ENCODE measurements at regions of chr3 and their contacts with region 1.

Region 1: DNA sequence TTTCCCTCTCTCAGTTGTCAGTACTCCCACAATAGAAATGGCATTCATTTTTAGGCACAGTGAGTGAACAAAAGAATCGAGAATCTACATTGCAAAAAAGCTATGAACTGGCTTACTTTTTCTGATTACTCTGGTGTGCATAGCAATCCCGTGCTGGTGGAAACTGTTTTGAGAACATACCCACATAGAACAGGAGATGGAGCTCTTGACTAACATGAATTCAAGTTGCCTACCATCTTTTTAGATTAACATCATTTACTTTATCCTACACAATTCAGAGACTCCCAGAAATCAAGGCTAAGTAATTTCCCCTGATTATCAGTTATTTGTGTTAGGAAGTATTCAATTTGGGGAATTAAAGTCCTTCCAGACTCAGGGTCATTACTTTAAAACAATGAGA is 326.6 kb downstream of the ARPP21 start:
- DNase-seq: peak; percentile 62 to 77 (median 73)
- H3K4me3 ChIP-seq: no peak overlapping the region
- H3K27ac ChIP-seq: no peak overlapping the region
- H3K4me1 ChIP-seq: peaks cover 17 to 43% (median 23%) of the 10 kb centered on the region in 4 experiments
- H3K27me3 ChIP-seq: no peaks in the 10 kb centered on the region

Region 2: GRCh38 chr3:35817216-35817615 is 148.7 kb before region 1 on chr3:
- CTCF ChIA-PET with region 1: no interaction called
- POLR2A ChIA-PET with region 1: no interaction called
- DNase-seq: no peak
- H3K4me3 ChIP-seq: no peak overlapping the region
- H3K27ac ChIP-seq: no peak overlapping the region
- H3K4me1 ChIP-seq: no peaks in the 10 kb centered on the region
- H3K27me3 ChIP-seq: no peaks in the 10 kb centered on the region

Region 3: DNA sequence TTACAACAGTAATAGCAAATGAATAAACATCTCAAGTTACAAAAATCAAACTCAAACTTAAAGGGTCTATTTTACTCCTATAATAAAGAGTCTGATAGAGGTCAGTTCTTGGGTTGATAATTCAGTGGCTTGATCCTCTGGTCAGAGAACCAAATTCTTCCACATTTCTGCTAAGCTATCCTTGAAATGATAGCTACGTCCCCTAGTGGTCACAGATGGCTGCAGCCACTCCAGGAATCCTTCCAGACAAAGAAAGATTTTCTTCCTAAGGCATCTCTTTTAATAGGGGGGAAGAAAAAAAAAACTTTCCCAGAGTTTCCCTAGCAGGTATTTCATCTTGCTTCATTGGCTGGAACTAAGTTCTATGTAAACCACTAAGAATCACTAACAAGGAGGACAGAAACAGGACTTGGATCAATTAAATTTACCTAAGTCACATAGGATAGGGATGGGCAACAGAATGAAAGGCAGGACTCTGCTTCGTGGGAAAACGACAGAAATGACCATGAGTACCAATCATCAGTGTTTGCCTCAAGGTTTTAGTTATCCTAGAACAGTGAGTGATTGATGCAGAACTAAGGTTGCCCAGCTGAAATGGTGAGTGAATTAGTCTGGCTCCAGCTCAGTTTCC is 575.1 kb after region 1 on chr3:
- CTCF ChIA-PET with region 1: interaction called, 39 read pairs
- POLR2A ChIA-PET with region 1: no interaction called
- DNase-seq: peak; percentile 21 to 31 (median 31)
- H3K4me3 ChIP-seq: no peak overlapping the region
- H3K27ac ChIP-seq: no peak overlapping the region
- H3K4me1 ChIP-seq: no peaks in the 10 kb centered on the region
- H3K27me3 ChIP-seq: peaks cover 0 to 2% (median 0%) of the 10 kb centered on the region in 5 experiments

Region 4: GRCh38 chr3:36693670-36694069 is 727.8 kb after region 1 on chr3:
- CTCF ChIA-PET with region 1: interaction called, 49 read pairs
- POLR2A ChIA-PET with region 1: no interaction called
- DNase-seq: no peak
- H3K4me3 ChIP-seq: no peak overlapping the region
- H3K27ac ChIP-seq: no peak overlapping the region
- H3K4me1 ChIP-seq: no peaks in the 10 kb centered on the region
- H3K27me3 ChIP-seq: peaks cover 0 to 3% (median 0%) of the 10 kb centered on the region in 5 experiments

Region 5: DNA sequence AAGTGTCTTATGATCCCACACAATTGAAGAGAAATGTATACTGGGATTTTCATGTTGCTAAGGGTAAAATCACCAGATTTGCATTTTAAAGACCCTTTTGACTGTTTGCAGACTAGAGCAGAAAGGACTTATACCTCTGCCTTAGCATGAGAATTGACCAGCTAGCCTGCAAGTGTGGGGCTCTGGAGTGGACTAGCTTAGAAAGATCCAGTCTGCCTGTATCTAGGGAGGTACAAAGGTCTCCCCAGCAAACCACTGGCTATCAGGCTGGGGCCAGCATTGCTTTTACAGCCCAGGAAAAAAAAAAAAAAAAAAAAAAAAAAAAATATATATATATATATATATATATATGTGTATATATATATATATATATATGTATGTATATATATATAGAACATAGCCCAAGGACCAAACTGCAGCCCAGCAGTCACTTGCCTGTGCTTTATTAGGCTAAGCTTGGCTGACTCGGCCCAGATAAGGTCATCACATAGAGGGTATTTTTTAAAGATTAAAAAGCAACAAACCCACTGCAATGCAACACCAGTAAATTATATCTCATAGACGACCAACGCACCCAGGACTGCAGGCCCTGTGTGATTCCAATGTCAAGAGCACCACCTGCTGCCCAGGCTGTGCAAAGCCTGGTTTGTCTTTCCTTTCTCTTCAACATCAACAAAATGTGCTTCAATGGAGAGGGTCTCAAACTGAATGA is 734.8 kb after region 1 on chr3:
- CTCF ChIA-PET with region 1: interaction called, 49 read pairs
- POLR2A ChIA-PET with region 1: no interaction called
- DNase-seq: peak; percentile 75 to 88 (median 84)
- H3K4me3 ChIP-seq: no peak overlapping the region
- H3K27ac ChIP-seq: no peak overlapping the region
- H3K4me1 ChIP-seq: no peaks in the 10 kb centered on the region
- H3K27me3 ChIP-seq: peaks cover 0 to under 1% (median 0%) of the 10 kb centered on the region in 5 experiments

Measured in common myeloid progenitor, CD34-positive (primary cell).